Activated CD4-positive, alpha-beta T cell treated with anti-CD3 and anti-CD28 coated beads for 36 hours (primary cell): ENCODE measurements at regions of chr22 and their contacts with region 1.

Region 1: DNA sequence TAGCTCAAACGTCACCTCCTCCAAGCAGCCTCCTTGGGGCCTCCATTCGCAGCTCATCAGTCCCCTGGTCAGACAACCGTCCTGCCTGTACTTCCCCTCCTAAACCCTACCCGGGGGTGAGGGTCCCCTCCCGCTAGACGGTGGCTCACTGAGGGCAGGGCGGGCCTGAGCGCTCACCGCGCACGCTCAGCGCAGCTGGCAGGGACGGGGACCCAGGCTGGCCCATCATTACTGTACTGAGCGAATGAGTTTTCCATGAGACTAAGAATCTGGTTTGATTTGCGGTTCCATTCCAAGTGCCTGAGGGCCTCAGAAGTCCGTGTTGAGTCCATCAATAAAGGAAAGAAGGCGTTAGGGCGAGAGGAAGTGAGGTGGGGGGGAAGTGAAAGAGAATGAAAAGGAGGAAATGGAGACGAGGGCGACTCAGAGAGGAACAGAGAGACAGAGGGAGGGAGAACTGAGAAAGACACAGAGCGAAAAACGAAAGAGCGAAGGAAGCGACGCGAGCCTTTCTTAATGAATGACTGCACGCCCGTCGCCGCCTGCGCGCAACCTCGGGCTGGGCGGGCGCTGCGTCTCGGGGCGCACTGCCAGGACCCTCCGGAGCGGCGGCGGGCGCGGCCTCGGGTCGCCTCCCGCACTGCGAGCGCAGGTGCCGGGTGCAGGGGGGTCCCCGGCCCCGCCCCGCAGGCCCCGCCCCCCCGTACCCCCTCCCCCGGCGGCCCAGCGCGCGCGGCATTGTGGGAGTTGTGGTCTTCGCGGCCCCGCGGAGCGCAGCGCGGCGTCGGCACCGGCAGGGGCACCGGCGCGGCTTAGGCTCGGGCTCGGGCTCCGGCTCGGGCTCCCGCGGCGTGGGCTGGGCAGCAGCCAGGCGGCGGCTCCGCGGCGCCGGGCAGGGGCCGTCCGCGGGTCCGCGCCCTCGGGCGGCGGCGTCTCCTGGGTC is at the start of gene ASPHD2:
- DNase-seq: peak; percentile 89
- ATAC-seq: peak; percentile 86
- H3K4me3 Mint-ChIP-seq: peak within 1 kb of the TSS; percentile 90
- H3K27ac Mint-ChIP-seq: peak within 1 kb of the TSS; percentile 93
- H3K4me1 Mint-ChIP-seq: peaks cover 48% of the 10 kb centered on the region
- H3K27me3 Mint-ChIP-seq: no peaks in the 10 kb centered on the region
- total RNA-seq, gene ASPHD2: 10.2 to 10.5 TPM

Region 2: DNA sequence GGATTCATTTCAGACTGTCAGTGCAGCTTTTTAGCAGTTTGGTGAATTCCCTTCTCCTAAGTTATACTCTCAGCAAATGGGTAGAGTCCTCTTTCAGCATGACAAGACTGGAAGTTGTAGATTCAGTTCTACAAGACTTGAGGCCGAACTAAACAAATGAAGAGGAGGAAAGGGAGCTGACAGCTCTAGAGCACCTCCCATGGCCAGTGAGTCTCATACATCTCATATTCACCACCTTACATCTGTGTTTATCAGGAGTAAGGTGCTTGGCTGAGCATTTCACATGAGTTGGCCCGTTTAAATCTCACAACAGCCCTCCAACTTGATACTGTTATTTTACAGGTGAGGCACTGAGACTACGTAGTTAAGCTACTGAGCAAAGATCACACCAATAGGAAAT is 229.1 kb before region 1 on chr22:
- CTCF ChIA-PET with region 1: no interaction called
- POLR2A ChIA-PET with region 1: no interaction called
- intact Hi-C with region 1: no loop called
- DNase-seq: no peak
- ATAC-seq: no peak
- H3K4me3 Mint-ChIP-seq: no peak overlapping the region
- H3K27ac Mint-ChIP-seq: no peak overlapping the region
- H3K4me1 Mint-ChIP-seq: no peaks in the 10 kb centered on the region
- H3K27me3 Mint-ChIP-seq: peaks cover 20% of the 10 kb centered on the region

Region 3: GRCh38 chr22:26295563-26296126 is 133.1 kb before region 1 on chr22:
- CTCF ChIA-PET with region 1: no interaction called
- POLR2A ChIA-PET with region 1: no interaction called
- intact Hi-C with region 1: loop called in 1 of 2 experiments (anchors 2 kb)
- DNase-seq: no peak
- ATAC-seq: no peak
- H3K4me3 Mint-ChIP-seq: no peak overlapping the region
- H3K27ac Mint-ChIP-seq: peak overlapping the region; percentile 82
- H3K4me1 Mint-ChIP-seq: peaks cover 15% of the 10 kb centered on the region
- H3K27me3 Mint-ChIP-seq: no peaks in the 10 kb centered on the region

Region 4: GRCh38 chr22:26398741-26399153 is 30.0 kb before region 1 on chr22:
- CTCF ChIA-PET with region 1: interaction called, 4 read pairs
- POLR2A ChIA-PET with region 1: no interaction called
- intact Hi-C with region 1: loop called in 1 of 2 experiments (anchors 1 kb)
- DNase-seq: peak; percentile 82
- ATAC-seq: peak; percentile 94
- H3K4me3 Mint-ChIP-seq: no peak overlapping the region
- H3K27ac Mint-ChIP-seq: no peak overlapping the region
- H3K4me1 Mint-ChIP-seq: peaks cover 2% of the 10 kb centered on the region
- H3K27me3 Mint-ChIP-seq: peaks cover 4% of the 10 kb centered on the region

Region 5: GRCh38 chr22:26483439-26484359 is 54.9 kb after region 1 on chr22 and contains the starts of genes HPS4 and SRRD:
- CTCF ChIA-PET with region 1: interaction called, 8 read pairs
- POLR2A ChIA-PET with region 1: interaction called, 11 read pairs
- intact Hi-C with region 1: loop called (anchors 1 to 2 kb)
- DNase-seq: peak; percentile 95
- ATAC-seq: peak; percentile 75
- H3K4me3 Mint-ChIP-seq: peak within 1 kb of the TSS; percentile 82
- H3K27ac Mint-ChIP-seq: peak within 1 kb of the TSS; percentile 95
- H3K4me1 Mint-ChIP-seq: peaks cover 66% of the 10 kb centered on the region
- H3K27me3 Mint-ChIP-seq: no peaks in the 10 kb centered on the region
- total RNA-seq, gene HPS4: 49.3 to 60.9 TPM
- total RNA-seq, gene SRRD: 17.5 to 28.5 TPM

Region 6: GRCh38 chr22:26568207-26568706 is 139.5 kb after region 1 on chr22:
- CTCF ChIA-PET with region 1: no interaction called
- POLR2A ChIA-PET with region 1: no interaction called
- intact Hi-C with region 1: no loop called
- DNase-seq: no peak
- ATAC-seq: no peak
- H3K4me3 Mint-ChIP-seq: no peak overlapping the region
- H3K27ac Mint-ChIP-seq: no peak overlapping the region
- H3K4me1 Mint-ChIP-seq: peaks cover 9% of the 10 kb centered on the region
- H3K27me3 Mint-ChIP-seq: no peaks in the 10 kb centered on the region

Region 7: GRCh38 chr22:26589845-26590736 is 161.3 kb after region 1 on chr22 and contains the start of gene TPST2:
- CTCF ChIA-PET with region 1: no interaction called
- POLR2A ChIA-PET with region 1: no interaction called
- intact Hi-C with region 1: loop called in 1 of 2 experiments (anchors 1 kb)
- DNase-seq: peak; percentile 87
- ATAC-seq: peak; percentile 84
- H3K4me3 Mint-ChIP-seq: peak within 1 kb of the TSS; percentile 90
- H3K27ac Mint-ChIP-seq: peak within 1 kb of the TSS; percentile 86
- H3K4me1 Mint-ChIP-seq: peaks cover 47% of the 10 kb centered on the region
- H3K27me3 Mint-ChIP-seq: no peaks in the 10 kb centered on the region
- total RNA-seq, gene TPST2: 17.4 to 18.3 TPM

Region 8: DNA sequence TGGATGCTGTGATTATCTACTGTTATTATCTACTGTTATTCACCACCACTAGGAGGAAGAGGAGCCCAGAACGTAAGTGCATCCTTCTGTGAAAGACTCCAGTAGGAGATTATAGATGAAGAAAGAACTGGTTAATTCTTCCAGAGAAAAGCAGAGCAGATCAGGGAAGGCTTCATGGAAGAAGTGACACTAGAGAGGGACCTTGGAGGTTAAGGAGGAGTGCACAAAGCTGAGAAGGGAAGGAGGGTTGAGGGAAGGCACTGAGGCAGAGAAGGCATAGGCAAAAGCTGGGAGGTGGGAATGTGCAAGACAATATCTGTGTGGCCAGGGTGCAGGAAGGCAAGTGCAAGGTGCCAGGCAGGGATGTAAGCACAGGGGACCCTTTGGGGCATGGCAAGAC is 175.6 kb after region 1 on chr22:
- CTCF ChIA-PET with region 1: no interaction called
- POLR2A ChIA-PET with region 1: no interaction called
- intact Hi-C with region 1: no loop called
- DNase-seq: no peak
- ATAC-seq: no peak
- H3K4me3 Mint-ChIP-seq: no peak overlapping the region
- H3K27ac Mint-ChIP-seq: no peak overlapping the region
- H3K4me1 Mint-ChIP-seq: peaks cover 6% of the 10 kb centered on the region
- H3K27me3 Mint-ChIP-seq: no peaks in the 10 kb centered on the region